Brain microvascular endothelial cell (primary cell): ENCODE measurements at regions of chr4 and their contacts with region 1.

Region 1: DNA sequence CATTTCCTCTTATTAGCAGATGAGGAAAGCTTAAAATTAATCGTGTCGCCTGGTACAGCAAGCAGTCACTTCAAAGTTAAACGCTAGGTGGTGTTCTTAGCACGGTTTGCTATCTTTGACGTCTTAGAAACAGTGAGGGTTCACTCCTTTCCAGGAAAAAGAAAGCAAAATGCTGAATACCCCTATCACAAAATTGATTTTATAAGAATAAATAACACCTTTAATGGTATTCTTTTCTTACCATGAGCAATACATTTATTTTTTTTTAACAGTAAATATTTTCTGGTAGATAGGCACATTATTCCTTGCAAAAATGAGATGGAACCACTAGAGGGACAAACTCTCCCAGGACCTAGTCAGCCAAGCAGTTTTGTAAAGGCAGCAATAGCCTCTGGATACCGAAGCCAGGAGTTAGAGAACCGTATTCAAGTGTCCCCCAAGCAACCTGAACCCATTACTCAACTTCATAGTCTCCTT is 153.9 kb downstream of the KDR start:
- DNase-seq: peak; percentile 44
- H3K4me3 ChIP-seq: no peak overlapping the region
- H3K27ac ChIP-seq: no peak overlapping the region
- H3K27me3 ChIP-seq: no peaks in the 10 kb centered on the region
- CTCF ChIP-seq: peak; percentile 67

Region 2: GRCh38 chr4:54322818-54323417 is 648.6 kb before region 1 on chr4:
- in situ Hi-C with region 1: loop called (anchors 25 kb)
- DNase-seq: peak; percentile 47
- H3K4me3 ChIP-seq: no peak overlapping the region
- H3K27ac ChIP-seq: no peak overlapping the region
- H3K27me3 ChIP-seq: no peaks in the 10 kb centered on the region
- CTCF ChIP-seq: peak; percentile 83

Region 3: DNA sequence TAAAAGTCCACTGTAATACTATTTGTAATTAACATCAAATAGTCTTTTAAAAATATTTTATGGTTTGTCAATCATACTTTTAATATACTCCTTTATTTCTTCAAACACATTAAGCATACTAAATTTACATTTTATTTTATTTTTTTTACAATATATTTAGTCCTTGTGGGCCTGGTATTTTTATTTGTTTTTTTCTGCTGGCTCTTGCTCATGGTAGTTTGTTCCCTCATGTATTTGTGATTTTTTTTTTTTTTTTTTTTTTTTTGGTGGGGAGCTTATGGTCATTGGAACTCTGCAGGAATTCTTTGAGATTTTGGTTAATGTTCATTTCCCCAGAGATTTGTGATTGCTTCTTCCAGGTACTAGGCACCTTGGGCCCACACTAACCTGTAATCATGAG is 557.0 kb before region 1 on chr4:
- in situ Hi-C with region 1: no loop called
- DNase-seq: no peak
- H3K4me3 ChIP-seq: no peak overlapping the region
- H3K27ac ChIP-seq: no peak overlapping the region
- H3K27me3 ChIP-seq: no peaks in the 10 kb centered on the region
- CTCF ChIP-seq: no peak

Region 4: DNA sequence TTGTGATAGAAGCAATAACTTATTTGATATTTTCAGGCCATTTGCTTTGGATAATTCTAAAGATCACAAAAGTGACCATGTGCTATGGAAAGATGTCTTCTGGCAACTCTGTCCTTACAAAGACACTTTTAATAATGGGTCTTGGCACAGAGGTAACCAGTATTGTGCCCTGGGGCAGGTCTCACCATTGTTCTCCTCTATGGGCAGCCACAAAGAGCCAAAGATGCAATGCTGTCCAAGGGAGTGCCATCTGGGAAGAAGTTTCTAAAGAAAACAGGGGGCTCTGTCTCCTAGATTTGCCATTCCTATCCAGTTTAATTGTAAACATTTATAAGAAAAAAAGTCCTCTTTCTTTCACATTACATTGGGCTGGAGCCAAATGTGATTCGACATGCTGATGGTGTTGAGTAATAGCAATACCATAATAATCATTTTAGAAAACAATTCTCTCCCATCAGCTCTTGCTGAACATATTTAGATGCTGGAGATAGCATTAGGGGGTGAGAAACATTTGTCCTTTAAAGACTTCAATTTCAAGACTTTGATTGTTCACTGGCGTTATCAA is 133.9 kb before region 1 on chr4:
- in situ Hi-C with region 1: no loop called
- DNase-seq: no peak
- H3K4me3 ChIP-seq: no peak overlapping the region
- H3K27ac ChIP-seq: no peak overlapping the region
- H3K27me3 ChIP-seq: no peaks in the 10 kb centered on the region
- CTCF ChIP-seq: no peak

Region 5: DNA sequence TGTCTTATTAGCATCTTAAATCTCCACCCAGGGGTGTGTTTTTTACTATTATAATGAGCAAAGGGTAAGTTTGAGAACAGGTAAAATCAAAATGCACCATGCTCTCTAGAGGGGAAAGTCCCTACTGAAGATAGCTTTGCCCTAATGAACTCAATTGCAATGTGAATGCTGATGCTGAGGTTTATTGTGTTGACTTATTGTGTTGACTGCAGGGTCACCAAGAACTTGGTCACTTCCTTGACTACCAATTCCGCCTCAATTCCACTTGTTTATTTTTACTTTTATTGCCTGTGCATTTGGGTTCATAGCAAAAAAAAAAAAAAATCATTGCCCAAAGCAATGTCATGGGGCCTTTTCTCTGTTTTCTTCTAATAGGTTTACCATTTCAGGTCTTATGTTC is 306.8 kb after region 1 on chr4:
- in situ Hi-C with region 1: no loop called
- DNase-seq: no peak
- H3K4me3 ChIP-seq: no peak overlapping the region
- H3K27ac ChIP-seq: no peak overlapping the region
- H3K27me3 ChIP-seq: no peaks in the 10 kb centered on the region
- CTCF ChIP-seq: no peak

Region 6: GRCh38 chr4:55297346-55297745 is 325.8 kb after region 1 on chr4:
- in situ Hi-C with region 1: no loop called
- DNase-seq: peak; percentile 81
- H3K4me3 ChIP-seq: no peak overlapping the region
- H3K27ac ChIP-seq: no peak overlapping the region
- H3K27me3 ChIP-seq: no peaks in the 10 kb centered on the region
- CTCF ChIP-seq: no peak

Region 7: GRCh38 chr4:55312489-55313101 is 341.1 kb after region 1 on chr4:
- in situ Hi-C with region 1: loop called (anchors 10 kb)
- DNase-seq: peak; percentile 56
- H3K4me3 ChIP-seq: no peak overlapping the region
- H3K27ac ChIP-seq: no peak overlapping the region
- H3K27me3 ChIP-seq: no peaks in the 10 kb centered on the region
- CTCF ChIP-seq: peak; percentile 90